Caco-2 (cell line): ENCODE measurements at regions of chr4 and their contacts with region 1.

Region 1: GRCh38 chr4:88792268-88792781 is 94.7 kb upstream of the NAP1L5 start:
- DNase-seq: peak in 1 of 2 experiments; percentile 4
- H3K4me3 ChIP-seq: no peak overlapping the region
- H3K4me3 Mint-ChIP-seq: no peak overlapping the region
- H3K27ac Mint-ChIP-seq: no peak overlapping the region
- H3K4me1 ChIP-seq: no peaks in the 10 kb centered on the region
- H3K4me1 Mint-ChIP-seq: peaks cover 14% of the 10 kb centered on the region
- H3K27me3 ChIP-seq: no peaks in the 10 kb centered on the region
- H3K27me3 Mint-ChIP-seq: no peaks in the 10 kb centered on the region
- CTCF ChIP-seq: no peak

Region 2: DNA sequence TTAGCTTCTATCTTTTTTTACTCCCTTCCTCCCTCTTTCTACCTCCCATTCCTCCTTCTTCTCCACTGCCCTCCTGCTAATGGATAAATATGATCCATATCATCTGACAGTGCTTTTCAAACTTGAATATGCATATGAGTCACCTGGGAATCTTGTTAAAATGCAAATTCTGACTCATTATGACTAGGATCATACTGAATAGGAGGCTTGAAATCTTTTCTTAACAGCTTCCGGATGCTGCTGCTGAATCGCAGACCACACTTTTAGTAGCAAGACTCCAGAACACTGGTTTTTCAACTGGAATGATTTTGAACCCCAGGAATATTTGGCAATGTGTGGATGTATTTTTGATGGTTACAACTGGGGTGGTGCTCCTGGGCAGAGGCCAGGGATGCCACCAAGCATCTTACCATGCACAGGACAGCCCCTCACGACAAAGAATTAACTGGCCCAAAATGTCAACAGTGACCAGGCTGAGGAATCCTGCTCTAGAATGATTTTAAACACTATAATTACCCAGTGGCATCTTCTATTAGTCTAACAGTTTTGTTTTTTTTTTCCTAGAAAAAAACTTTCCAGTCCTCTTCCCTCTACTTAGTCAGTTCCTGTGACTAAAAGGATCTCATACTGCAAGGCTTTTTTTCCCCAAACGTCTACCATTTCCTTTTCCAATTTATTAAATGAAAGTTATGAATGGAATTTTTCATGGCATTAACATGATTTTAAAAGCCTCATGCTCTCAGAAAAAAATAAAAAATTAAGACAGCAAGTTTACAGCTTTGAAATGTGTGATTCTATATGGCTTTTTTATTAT is 258.2 kb before region 1 on chr4:
- CTCF ChIA-PET with region 1: no interaction called
- POLR2A ChIA-PET with region 1: no interaction called
- intact Hi-C with region 1: loop called (anchors 10 kb)
- DNase-seq: no peak
- H3K4me3 ChIP-seq: no peak overlapping the region
- H3K4me3 Mint-ChIP-seq: no peak overlapping the region
- H3K27ac Mint-ChIP-seq: no peak overlapping the region
- H3K4me1 ChIP-seq: no peaks in the 10 kb centered on the region
- H3K4me1 Mint-ChIP-seq: no peaks in the 10 kb centered on the region
- H3K27me3 ChIP-seq: no peaks in the 10 kb centered on the region
- H3K27me3 Mint-ChIP-seq: no peaks in the 10 kb centered on the region
- CTCF ChIP-seq: no peak

Region 3: DNA sequence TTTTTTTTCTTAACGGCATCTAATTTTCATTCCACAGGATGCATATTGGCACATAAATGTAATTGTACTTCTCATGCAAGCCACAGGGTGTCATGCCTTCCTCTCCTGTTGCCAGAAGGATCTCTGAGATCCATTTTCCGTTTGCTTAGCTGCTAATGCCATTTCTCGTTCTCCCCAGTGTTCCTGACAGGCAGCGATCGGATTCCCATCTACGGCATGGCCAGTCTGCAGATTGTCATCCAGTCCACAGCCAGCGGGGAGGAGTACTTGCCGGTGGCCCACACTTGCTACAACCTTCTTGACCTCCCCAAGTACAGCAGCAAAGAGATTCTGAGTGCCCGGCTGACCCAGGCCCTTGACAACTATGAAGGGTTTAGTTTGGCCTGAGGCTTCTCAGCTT is 85.8 kb before region 1 on chr4:
- CTCF ChIA-PET with region 1: interaction called, 11 read pairs
- POLR2A ChIA-PET with region 1: no interaction called
- intact Hi-C with region 1: loop called (anchors 1 kb)
- DNase-seq: peak; percentile 39 to 46
- H3K4me3 ChIP-seq: no peak overlapping the region
- H3K4me3 Mint-ChIP-seq: no peak overlapping the region
- H3K27ac Mint-ChIP-seq: no peak overlapping the region
- H3K4me1 ChIP-seq: no peaks in the 10 kb centered on the region
- H3K4me1 Mint-ChIP-seq: no peaks in the 10 kb centered on the region
- H3K27me3 ChIP-seq: no peaks in the 10 kb centered on the region
- H3K27me3 Mint-ChIP-seq: no peaks in the 10 kb centered on the region
- CTCF ChIP-seq: peak; percentile 45 to 52

Region 4: GRCh38 chr4:89324671-89325070 is 532.3 kb after region 1 on chr4:
- CTCF ChIA-PET with region 1: no interaction called
- POLR2A ChIA-PET with region 1: no interaction called
- intact Hi-C with region 1: no loop called
- DNase-seq: no peak
- H3K4me3 ChIP-seq: no peak overlapping the region
- H3K4me3 Mint-ChIP-seq: no peak overlapping the region
- H3K27ac Mint-ChIP-seq: no peak overlapping the region
- H3K4me1 ChIP-seq: no peaks in the 10 kb centered on the region
- H3K4me1 Mint-ChIP-seq: no peaks in the 10 kb centered on the region
- H3K27me3 ChIP-seq: no peaks in the 10 kb centered on the region
- H3K27me3 Mint-ChIP-seq: no peaks in the 10 kb centered on the region
- CTCF ChIP-seq: no peak